CD4-positive, alpha-beta memory T cell (primary cell): ENCODE measurements at regions of chr12 and their contacts with region 1.

Region 1: GRCh38 chr12:47190271-47190750 is 110.6 kb upstream of the AMIGO2 start:
- DNase-seq: no peak
- H3K4me3 ChIP-seq: no peak overlapping the region
- H3K4me3 Mint-ChIP-seq: peak overlapping the region in 7 of 8 donors; percentile 8 to 93 (median 69)
- H3K27ac ChIP-seq: peak overlapping the region; percentile 42
- H3K27ac Mint-ChIP-seq: peak overlapping the region; percentile 62 to 95 (median 93)
- H3K4me1 ChIP-seq: peaks cover 80% of the 10 kb centered on the region
- H3K4me1 Mint-ChIP-seq: peaks cover 67 to 90% (median 78%) of the 10 kb centered on the region in 4 donors
- H3K27me3 ChIP-seq: no peaks in the 10 kb centered on the region
- H3K27me3 Mint-ChIP-seq: no peaks in the 10 kb centered on the region

Region 2: GRCh38 chr12:47071241-47071852 is 119.0 kb before region 1 on chr12:
- CTCF ChIA-PET with region 1: interaction called, 16 read pairs
- POLR2A ChIA-PET with region 1: interaction called, 4 read pairs
- intact Hi-C with region 1: no loop called
- DNase-seq: peak in 4 of 5 donors; percentile 15 to 32 (median 26)
- H3K4me3 ChIP-seq: no peak overlapping the region
- H3K4me3 Mint-ChIP-seq: no peak overlapping the region
- H3K27ac ChIP-seq: no peak overlapping the region
- H3K27ac Mint-ChIP-seq: no peak overlapping the region
- H3K4me1 ChIP-seq: no peaks in the 10 kb centered on the region
- H3K4me1 Mint-ChIP-seq: peaks cover 0 to 7% (median 3%) of the 10 kb centered on the region in 4 donors
- H3K27me3 ChIP-seq: no peaks in the 10 kb centered on the region
- H3K27me3 Mint-ChIP-seq: no peaks in the 10 kb centered on the region

Region 3: GRCh38 chr12:47156167-47156736 is 34.1 kb before region 1 on chr12:
- CTCF ChIA-PET with region 1: interaction called, 5 read pairs
- POLR2A ChIA-PET with region 1: interaction called, 3 read pairs
- intact Hi-C with region 1: loop called (anchors 5 kb)
- DNase-seq: peak in 4 of 5 donors; percentile 16 to 38 (median 24)
- H3K4me3 ChIP-seq: no peak overlapping the region
- H3K4me3 Mint-ChIP-seq: peak overlapping the region in 4 of 8 donors; percentile 9 to 60 (median 39)
- H3K27ac ChIP-seq: no peak overlapping the region
- H3K27ac Mint-ChIP-seq: peak overlapping the region; percentile 28 to 93 (median 73)
- H3K4me1 ChIP-seq: peaks cover 32% of the 10 kb centered on the region
- H3K4me1 Mint-ChIP-seq: peaks cover 31 to 49% (median 42%) of the 10 kb centered on the region in 4 donors
- H3K27me3 ChIP-seq: no peaks in the 10 kb centered on the region
- H3K27me3 Mint-ChIP-seq: no peaks in the 10 kb centered on the region

Region 4: GRCh38 chr12:47207340-47207717 is 17.0 kb after region 1 on chr12:
- CTCF ChIA-PET with region 1: interaction called, 59 read pairs
- POLR2A ChIA-PET with region 1: interaction called, 354 read pairs
- intact Hi-C with region 1: loop called (anchors 2 kb)
- DNase-seq: peak; percentile 38 to 76 (median 44)
- H3K4me3 ChIP-seq: peak overlapping the region; percentile 24 to 64
- H3K4me3 Mint-ChIP-seq: peak overlapping the region; percentile 68 to 97 (median 82)
- H3K27ac ChIP-seq: peak overlapping the region; percentile 60
- H3K27ac Mint-ChIP-seq: peak overlapping the region; percentile 87 to 96 (median 94)
- H3K4me1 ChIP-seq: peaks cover 77% of the 10 kb centered on the region
- H3K4me1 Mint-ChIP-seq: peaks cover 64 to 88% (median 76%) of the 10 kb centered on the region in 4 donors
- H3K27me3 ChIP-seq: no peaks in the 10 kb centered on the region
- H3K27me3 Mint-ChIP-seq: no peaks in the 10 kb centered on the region

Region 5: DNA sequence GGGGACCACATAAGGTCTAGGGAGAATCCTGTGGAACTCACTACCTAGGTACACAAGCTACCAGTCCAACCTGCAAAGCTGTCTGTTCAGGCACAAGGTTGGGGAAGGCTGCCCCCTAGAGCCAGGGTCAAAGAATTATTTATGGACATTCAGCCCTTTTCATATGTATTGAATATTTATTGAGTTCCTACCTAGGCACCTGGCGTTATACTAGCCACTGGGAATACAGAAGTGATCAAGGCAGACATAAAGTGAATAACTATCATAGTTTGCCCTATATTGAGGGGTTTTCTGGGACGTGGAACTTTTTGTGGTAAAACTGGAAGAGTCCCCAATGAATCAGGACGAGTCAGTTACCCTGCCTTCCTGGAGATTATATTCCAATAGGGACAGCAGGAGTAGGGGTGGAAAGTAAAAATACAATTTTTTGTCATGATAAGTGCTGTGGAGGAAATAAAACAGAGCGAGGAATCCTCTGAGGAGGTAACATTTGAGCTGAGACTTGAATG is 577.0 kb after region 1 on chr12:
- CTCF ChIA-PET with region 1: no interaction called
- POLR2A ChIA-PET with region 1: no interaction called
- intact Hi-C with region 1: no loop called
- DNase-seq: peak; percentile 61 to 72 (median 67)
- H3K4me3 ChIP-seq: no peak overlapping the region
- H3K4me3 Mint-ChIP-seq: no peak overlapping the region
- H3K27ac ChIP-seq: no peak overlapping the region
- H3K27ac Mint-ChIP-seq: peak overlapping the region in 1 of 7 donors; percentile 7
- H3K4me1 ChIP-seq: peaks cover under 1% of the 10 kb centered on the region
- H3K4me1 Mint-ChIP-seq: peaks cover 4 to 14% (median 6%) of the 10 kb centered on the region in 4 donors
- H3K27me3 ChIP-seq: no peaks in the 10 kb centered on the region
- H3K27me3 Mint-ChIP-seq: no peaks in the 10 kb centered on the region